Gastrocnemius medialis (tissue), 4 donors: ENCODE measurements at regions of chr14 and their contacts with region 1.

Region 1: DNA sequence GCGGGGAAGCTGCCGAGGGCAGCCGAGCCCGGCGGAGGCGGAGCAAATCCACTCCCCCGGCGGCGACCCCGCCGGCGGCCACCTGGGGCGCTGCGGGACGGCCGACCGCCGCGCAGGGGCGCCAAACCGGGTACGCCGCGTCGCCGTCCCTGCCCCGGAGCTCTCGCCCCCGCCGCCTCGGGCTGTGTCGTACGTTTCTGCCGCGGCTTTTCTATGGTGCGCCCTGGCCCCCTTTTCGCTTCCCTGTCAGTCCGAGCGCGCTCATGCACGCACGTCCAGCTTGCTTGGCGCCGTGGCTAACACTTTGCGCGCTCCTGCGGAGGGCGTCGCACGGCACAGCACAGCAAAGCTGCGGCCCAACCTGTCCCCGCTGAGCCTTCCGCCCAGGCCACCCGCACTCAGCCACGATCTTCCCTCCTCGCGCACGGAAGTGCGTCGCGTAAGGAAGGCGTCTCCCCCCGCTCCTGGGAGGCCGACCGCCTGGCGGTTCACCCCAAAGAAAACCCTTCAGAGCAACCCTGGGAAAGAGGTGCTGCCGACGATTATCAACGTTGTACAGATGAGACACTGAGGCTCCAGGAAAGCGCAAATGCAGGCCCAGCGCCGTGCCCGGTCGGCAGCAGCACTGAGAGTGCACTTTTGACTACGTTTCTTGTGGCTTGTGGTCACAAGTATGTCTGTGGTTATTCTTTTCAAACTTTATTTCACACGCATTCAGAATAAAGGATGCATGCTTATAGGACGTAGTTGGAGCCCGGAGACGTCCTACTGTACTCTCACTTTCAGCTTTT is at the start of gene HECTD1:
- DNase-seq: peak; percentile 59 to 74
- ATAC-seq: peak; percentile 83 to 87
- H3K4me3 ChIP-seq: peak within 1 kb of the TSS; percentile 83 to 90 (median 88)
- H3K27ac ChIP-seq: peak within 1 kb of the TSS; percentile 96 to 99 (median 99)
- H3K4me1 ChIP-seq: peaks cover 18 to 32% of the 10 kb centered on the region in 2 donors
- H3K27me3 ChIP-seq: no peaks in the 10 kb centered on the region
- CTCF ChIP-seq: peak; percentile 30 to 96 (median 92)
- POLR2A ChIP-seq: peak; percentile 56 to 66
- total RNA-seq, gene HECTD1: 356 to 453 (median 420) TPM

Region 2: GRCh38 chr14:31026395-31027118 is 181.4 kb before region 1 on chr14:
- in situ Hi-C with region 1: no loop called
- intact Hi-C with region 1: loop called (anchors 1 kb)
- DNase-seq: peak; percentile 96 to 98
- ATAC-seq: peak; percentile 86 to 94
- H3K4me3 ChIP-seq: peak overlapping the region; percentile 90 to 98 (median 92)
- H3K27ac ChIP-seq: peak overlapping the region; percentile 95 to 100 (median 100)
- H3K4me1 ChIP-seq: peaks cover 28 to 29% of the 10 kb centered on the region in 2 donors
- H3K27me3 ChIP-seq: no peaks in the 10 kb centered on the region
- CTCF ChIP-seq: peak in 2 of 5 experiments; percentile 6 to 9
- POLR2A ChIP-seq: peak; percentile 58 to 85

Region 3: GRCh38 chr14:31166271-31166710 is 41.7 kb before region 1 on chr14:
- in situ Hi-C with region 1: no loop called
- intact Hi-C with region 1: loop called (anchors 2 kb)
- DNase-seq: no peak
- ATAC-seq: peak; percentile 45 to 58
- H3K4me3 ChIP-seq: no peak overlapping the region
- H3K27ac ChIP-seq: peak overlapping the region; percentile 84 to 89 (median 86)
- H3K4me1 ChIP-seq: peaks cover 15 to 31% of the 10 kb centered on the region in 2 donors
- H3K27me3 ChIP-seq: no peaks in the 10 kb centered on the region
- CTCF ChIP-seq: no peak
- POLR2A ChIP-seq: no peak

Region 4: DNA sequence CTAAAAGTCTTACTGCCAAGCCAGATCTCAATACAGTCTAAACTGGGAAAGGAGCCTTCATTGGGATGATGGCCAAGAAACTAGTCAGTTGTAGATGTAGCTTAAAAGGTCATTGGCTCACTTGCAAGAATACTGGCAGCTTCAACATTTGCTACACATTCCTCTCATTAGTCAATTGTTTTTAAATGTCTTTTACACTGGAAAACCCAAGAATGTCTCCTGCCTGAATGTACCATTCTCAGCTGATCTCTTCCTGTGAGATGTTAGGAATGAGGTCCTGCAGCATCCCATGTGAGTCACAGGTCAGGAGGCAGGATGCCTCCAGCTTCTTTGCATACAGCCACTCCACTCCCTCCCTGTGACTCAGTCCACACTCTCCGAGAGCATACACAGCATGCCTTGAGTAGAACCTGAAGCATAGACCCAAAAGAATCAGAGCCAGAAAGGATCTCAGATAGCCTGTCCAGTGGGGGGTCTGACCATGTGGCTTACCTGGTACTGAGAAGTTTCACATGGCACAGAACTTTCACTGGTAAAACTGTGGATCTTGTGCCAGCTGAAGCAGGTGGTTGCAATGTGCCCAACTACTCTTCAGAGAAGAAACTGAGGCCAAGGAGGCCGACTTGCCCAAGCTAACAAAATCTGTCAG is 55.7 kb after region 1 on chr14:
- in situ Hi-C with region 1: no loop called
- intact Hi-C with region 1: loop called (anchors 2 kb)
- DNase-seq: peak in 1 of 2 donors; percentile 26
- ATAC-seq: peak; percentile 32 to 67
- H3K4me3 ChIP-seq: no peak overlapping the region
- H3K27ac ChIP-seq: peak overlapping the region in 2 of 4 donors; percentile 18 to 59
- H3K4me1 ChIP-seq: peaks cover 14 to 20% of the 10 kb centered on the region in 2 donors
- H3K27me3 ChIP-seq: no peaks in the 10 kb centered on the region
- CTCF ChIP-seq: no peak
- POLR2A ChIP-seq: no peak

Region 5: GRCh38 chr14:31336652-31337051 is 128.7 kb after region 1 on chr14:
- in situ Hi-C with region 1: loop called in 1 of 4 experiments (anchors 25 kb)
- intact Hi-C with region 1: loop called (anchors 1 kb)
- DNase-seq: no peak
- ATAC-seq: peak; percentile 87 to 91
- H3K4me3 ChIP-seq: no peak overlapping the region
- H3K27ac ChIP-seq: peak overlapping the region; percentile 78 to 91 (median 87)
- H3K4me1 ChIP-seq: peaks cover 18 to 23% of the 10 kb centered on the region in 2 donors
- H3K27me3 ChIP-seq: no peaks in the 10 kb centered on the region
- CTCF ChIP-seq: peak in 1 of 5 experiments; percentile 17
- POLR2A ChIP-seq: no peak

Region 6: GRCh38 chr14:31420319-31421111 is 212.6 kb after region 1 on chr14 and contains the start of gene HEATR5A:
- in situ Hi-C with region 1: no loop called
- intact Hi-C with region 1: loop called (anchors 2 kb)
- DNase-seq: peak; percentile 91 to 92
- ATAC-seq: peak; percentile 93
- H3K4me3 ChIP-seq: peak within 1 kb of the TSS; percentile 80 to 97 (median 96)
- H3K27ac ChIP-seq: peak within 1 kb of the TSS; percentile 92 to 94 (median 92)
- H3K4me1 ChIP-seq: peaks cover 16 to 21% of the 10 kb centered on the region in 2 donors
- H3K27me3 ChIP-seq: no peaks in the 10 kb centered on the region
- CTCF ChIP-seq: peak in 3 of 5 experiments; percentile 29 to 37 (median 32)
- POLR2A ChIP-seq: peak; percentile 99
- total RNA-seq, gene HEATR5A: 11.3 to 39.7 (median 19.3) TPM